H1 (cell line): ENCODE measurements at regions of chr2 and their contacts with region 1.

Region 1: GRCh38 chr2:25362049-25362433 is 20.3 kb upstream of the DNMT3A start:
- DNase-seq: peak; percentile 88 to 100
- H3K4me3 ChIP-seq: peak overlapping the region in 1 of 4 experiments; percentile 44; a peak in 3 of 8 replicates
- H3K27ac ChIP-seq: no peak overlapping the region
- H3K4me1 ChIP-seq: peaks cover 0 to 9% (median 5%) of the 10 kb centered on the region in 4 experiments; a peak in 6 of 7 replicates
- H3K27me3 ChIP-seq: peaks cover 0 to 31% (median 22%) of the 10 kb centered on the region in 4 experiments; a peak in 6 of 7 replicates
- CTCF ChIP-seq: peak; percentile 85 to 96 (median 90)
- EP300 ChIP-seq: no peak
- POLR2A ChIP-seq: no peak
- RAD21 ChIP-seq: peak; percentile 43 to 54

Region 2: GRCh38 chr2:25323042-25323514 is 39.0 kb before region 1 on chr2:
- CTCF ChIA-PET with region 1: interaction called, 17 read pairs
- POLR2A ChIA-PET with region 1: no interaction called
- DNase-seq: peak; percentile 39 to 85
- H3K4me3 ChIP-seq: no peak overlapping the region
- H3K27ac ChIP-seq: no peak overlapping the region
- H3K4me1 ChIP-seq: peaks cover 3 to 6% (median 4%) of the 10 kb centered on the region in 4 experiments; a peak in 6 of 7 replicates
- H3K27me3 ChIP-seq: no peaks in the 10 kb centered on the region; a peak in 1 of 7 replicates
- CTCF ChIP-seq: no peak
- EP300 ChIP-seq: no peak
- POLR2A ChIP-seq: no peak
- RAD21 ChIP-seq: no peak

Region 3: DNA sequence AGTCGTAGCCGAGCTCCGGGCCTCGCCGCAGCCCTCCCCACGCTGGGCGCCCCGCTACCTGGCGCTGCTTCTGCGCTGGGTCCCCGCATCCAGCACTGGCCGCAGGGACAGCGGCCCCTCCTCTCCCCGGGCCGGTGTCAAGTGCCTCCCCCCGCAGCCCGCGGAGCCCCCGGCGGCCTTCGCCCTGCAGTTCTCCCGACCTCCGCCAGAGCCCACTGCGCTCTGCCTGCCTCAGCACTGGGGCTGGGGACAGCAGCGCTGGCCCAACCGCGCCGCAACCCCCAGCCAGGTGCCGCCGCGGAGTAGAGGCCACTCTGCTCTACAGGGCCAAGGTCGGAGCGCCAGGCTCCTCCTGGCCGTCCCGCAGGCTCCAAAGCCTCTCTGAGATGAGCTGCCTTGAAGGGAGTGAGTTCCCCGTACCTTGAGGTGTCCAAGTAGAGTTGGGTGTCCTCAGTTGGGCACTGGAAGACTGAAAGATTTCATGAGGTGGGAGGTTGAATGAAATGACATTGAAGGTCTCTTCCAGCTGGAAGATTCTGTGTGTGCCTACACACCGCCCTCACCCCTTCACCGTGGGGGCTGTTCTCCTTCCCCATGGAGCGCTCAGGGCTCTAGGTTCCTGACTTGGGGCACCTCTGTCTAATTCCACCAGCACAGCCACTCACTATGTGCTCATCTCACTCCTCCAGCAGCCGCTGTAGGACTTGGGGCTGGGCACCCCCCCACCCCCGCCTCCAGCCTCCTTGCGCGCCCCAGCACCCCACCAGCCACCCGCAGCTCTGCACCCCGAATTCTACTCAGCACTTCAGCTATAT is 19.5 kb before region 1 on chr2:
- CTCF ChIA-PET with region 1: interaction called, 36 read pairs
- POLR2A ChIA-PET with region 1: interaction called, 3 read pairs
- DNase-seq: peak; percentile 77 to 93
- H3K4me3 ChIP-seq: peak overlapping the region; percentile 37 to 64 (median 48); a peak in 7 of 8 replicates
- H3K27ac ChIP-seq: no peak overlapping the region
- H3K4me1 ChIP-seq: peaks cover 0 to 20% (median 10%) of the 10 kb centered on the region in 4 experiments; a peak in 5 of 7 replicates
- H3K27me3 ChIP-seq: peaks cover 0 to 18% (median 11%) of the 10 kb centered on the region in 4 experiments; a peak in 6 of 7 replicates
- CTCF ChIP-seq: peak in 2 of 3 experiments; percentile 95 to 96; a peak in 3 of 4 replicates
- EP300 ChIP-seq: peak in 1 of 2 experiments; percentile 15; a peak in 2 of 3 replicates
- POLR2A ChIP-seq: no peak
- RAD21 ChIP-seq: peak; percentile 80 to 86